RWPE1 (cell line): ENCODE measurements at regions of chr3 and their contacts with region 1.

Region 1: GRCh38 chr3:49539659-49540560 is 14.4 kb upstream of the BSN start:
- DNase-seq: peak; percentile 79
- H3K27ac ChIP-seq: peak overlapping the region; percentile 88
- CTCF ChIP-seq: peak; percentile 94

Region 2: DNA sequence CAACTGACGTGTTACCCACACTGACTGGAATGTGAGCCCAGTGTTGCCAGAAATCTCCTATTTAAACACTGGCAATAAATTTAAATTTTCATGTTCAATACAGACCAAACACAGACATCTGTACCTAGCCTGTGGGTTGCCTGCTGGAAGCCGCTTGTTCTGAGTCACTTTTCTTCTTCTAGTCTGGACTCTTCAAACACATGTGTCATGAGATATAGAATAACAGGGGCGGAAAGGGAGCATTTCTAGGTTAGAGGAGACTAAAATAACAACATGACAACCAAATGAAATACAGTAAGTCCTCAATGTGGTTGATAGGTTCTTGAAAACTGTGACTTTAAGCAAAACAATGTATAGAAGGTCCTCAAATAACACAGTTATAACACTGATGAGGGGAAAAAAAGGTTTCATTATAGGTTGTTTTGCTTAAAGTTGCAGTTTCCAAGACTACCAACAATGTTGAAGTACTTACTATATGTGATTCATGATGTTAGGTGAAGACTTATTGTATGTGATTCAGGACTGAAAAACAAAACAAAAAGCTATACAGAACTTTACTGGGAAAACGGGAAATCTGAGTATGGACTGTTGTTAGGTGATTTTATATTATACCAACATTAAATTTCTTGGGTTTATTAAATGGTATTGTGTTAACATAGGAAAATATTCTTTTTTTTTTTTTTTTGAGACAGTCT is 755.3 kb before region 1 on chr3:
- CTCF ChIA-PET with region 1: no interaction called
- POLR2A ChIA-PET with region 1: no interaction called
- DNase-seq: no peak
- H3K27ac ChIP-seq: no peak overlapping the region
- CTCF ChIP-seq: no peak

Region 3: DNA sequence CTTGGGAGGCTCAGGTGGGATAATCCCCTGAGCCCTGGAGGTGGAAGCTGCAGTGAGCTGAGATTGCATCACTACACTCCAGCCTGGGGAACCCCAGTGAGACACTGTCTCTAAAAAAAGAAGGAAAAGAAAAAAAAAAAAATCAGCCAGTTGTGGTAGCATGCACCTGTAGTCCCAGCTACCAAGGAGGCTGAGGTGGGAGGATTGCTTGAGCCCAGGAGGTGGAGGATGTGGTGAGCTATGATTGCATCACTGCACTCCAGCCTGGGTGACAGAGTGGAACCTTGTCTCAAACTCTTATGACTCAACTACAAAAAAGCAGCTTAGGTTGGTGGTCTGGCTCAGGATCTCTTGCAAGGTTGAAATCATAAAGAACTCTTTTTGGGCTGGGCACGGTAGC is 162.4 kb before region 1 on chr3:
- CTCF ChIA-PET with region 1: no interaction called
- POLR2A ChIA-PET with region 1: no interaction called
- DNase-seq: no peak
- H3K27ac ChIP-seq: peak overlapping the region; percentile 80
- CTCF ChIP-seq: no peak

Region 4: GRCh38 chr3:49422379-49423248 is 117.3 kb before region 1 on chr3 and contains the start of gene AMT:
- CTCF ChIA-PET with region 1: no interaction called
- POLR2A ChIA-PET with region 1: no interaction called
- DNase-seq: no peak
- H3K27ac ChIP-seq: peak within 1 kb of the TSS; percentile 96
- CTCF ChIP-seq: no peak

Region 5: DNA sequence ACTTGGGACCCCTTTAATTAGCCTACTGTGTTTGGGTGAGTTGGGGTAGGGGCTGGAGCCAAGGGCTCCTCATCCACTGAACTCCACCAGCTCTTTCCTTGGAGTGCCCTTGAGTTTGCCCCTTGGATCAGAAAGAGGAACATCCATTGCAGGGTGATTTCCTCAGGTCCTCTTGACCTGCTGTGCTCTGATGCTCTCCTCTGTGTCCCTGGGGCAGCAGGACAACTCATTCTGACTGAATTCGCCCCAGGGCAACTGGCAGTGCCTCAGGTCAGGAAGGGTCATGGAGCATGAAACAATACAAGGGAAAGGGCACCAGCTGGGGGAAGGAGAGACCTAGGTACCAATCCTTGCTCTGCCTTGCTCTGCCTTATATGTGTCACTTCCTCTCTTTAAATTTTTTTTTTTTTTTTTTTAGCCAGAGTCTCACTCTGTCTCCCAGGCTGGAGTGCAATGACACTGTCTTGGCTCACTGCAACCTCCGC is 62.2 kb after region 1 on chr3:
- CTCF ChIA-PET with region 1: no interaction called
- POLR2A ChIA-PET with region 1: no interaction called
- DNase-seq: no peak
- H3K27ac ChIP-seq: peak overlapping the region; percentile 53; the same call in 1 of the 2 replicates
- CTCF ChIP-seq: no peak

Region 6: GRCh38 chr3:49665822-49666519 is 126.1 kb after region 1 on chr3:
- CTCF ChIA-PET with region 1: interaction called, 44 read pairs
- POLR2A ChIA-PET with region 1: no interaction called
- DNase-seq: no peak
- H3K27ac ChIP-seq: peak overlapping the region; percentile 29
- CTCF ChIP-seq: no peak

Region 7: GRCh38 chr3:49673715-49674496 is 134.0 kb after region 1 on chr3 and contains the start of gene APEH:
- CTCF ChIA-PET with region 1: interaction called, 44 read pairs
- POLR2A ChIA-PET with region 1: interaction called, 6 read pairs
- DNase-seq: peak; percentile 91
- H3K27ac ChIP-seq: peak within 1 kb of the TSS; percentile 95
- CTCF ChIP-seq: no peak